HEK293 (cell line): ENCODE measurements at regions of chr1 and their contacts with region 1.

Region 1: DNA sequence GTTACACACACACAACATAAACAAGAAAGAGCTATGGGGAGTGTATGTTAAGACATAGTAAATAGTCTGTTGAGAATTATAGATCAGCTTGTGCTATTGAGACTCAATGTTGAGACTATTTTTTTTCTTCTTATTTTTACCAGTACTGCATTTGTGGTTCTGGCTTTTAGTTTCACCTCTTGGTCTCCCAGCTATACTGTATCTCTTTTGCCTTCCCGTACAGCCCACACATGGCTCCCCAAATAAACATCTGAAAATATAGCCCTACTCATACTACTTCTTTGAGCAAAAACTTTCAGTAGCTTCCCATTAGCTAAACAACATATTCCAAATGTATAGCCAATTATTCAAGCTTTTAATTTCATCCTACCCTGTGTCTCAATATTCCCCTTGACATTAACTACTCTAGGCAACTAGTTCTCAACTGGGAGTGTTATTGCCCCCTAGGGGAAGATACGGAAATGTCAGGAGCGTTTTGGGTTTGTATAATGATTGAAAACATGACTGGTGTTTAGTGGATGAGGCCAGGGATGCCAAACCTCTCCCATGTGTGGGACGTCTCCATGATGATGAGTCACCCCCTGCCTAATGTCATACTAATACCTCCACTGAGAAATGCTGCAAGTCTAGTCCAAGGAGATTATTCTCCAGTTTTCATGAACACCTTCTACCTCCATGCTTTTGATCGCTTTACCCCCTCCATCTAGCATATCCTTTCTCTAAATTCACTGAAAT is 6.8 kb downstream of the RPE65 start:
- H3K4me3 ChIP-seq: no peak overlapping the region
- H3K27ac ChIP-seq: no peak overlapping the region
- H3K4me1 ChIP-seq: no peaks in the 10 kb centered on the region
- CTCF ChIP-seq: no peak

Region 2: GRCh38 chr1:68065766-68066165 is 377.2 kb before region 1 on chr1:
- CTCF ChIA-PET with region 1: no interaction called
- POLR2A ChIA-PET with region 1: no interaction called
- H3K4me3 ChIP-seq: no peak overlapping the region
- H3K27ac ChIP-seq: no peak overlapping the region
- H3K4me1 ChIP-seq: no peaks in the 10 kb centered on the region
- CTCF ChIP-seq: no peak

Region 3: DNA sequence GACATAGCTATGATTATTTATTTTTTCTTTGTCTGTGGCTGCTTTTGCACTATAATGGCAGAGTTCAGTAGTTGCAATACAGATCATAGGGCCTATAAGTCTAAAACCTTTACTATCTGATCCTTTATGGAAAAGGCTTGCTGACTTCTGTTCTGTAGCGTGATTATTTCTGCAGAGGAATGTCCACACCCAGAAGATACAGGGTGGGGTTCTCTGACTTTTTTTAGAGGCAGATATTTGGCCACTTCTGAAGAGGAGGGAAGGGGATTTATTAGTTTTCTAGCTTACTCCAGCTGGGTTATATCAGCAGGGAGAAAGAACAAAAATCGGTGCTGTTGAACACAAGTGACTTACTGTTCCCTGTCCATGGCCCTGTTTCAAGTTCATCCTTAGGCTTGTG is 90.8 kb before region 1 on chr1:
- CTCF ChIA-PET with region 1: interaction called, 16 read pairs
- POLR2A ChIA-PET with region 1: no interaction called
- H3K4me3 ChIP-seq: no peak overlapping the region
- H3K27ac ChIP-seq: no peak overlapping the region
- H3K4me1 ChIP-seq: peaks cover 7% of the 10 kb centered on the region; the same call in 1 of the 2 replicates
- CTCF ChIP-seq: no peak

Region 4: GRCh38 chr1:68429233-68429808 is 13.7 kb before region 1 on chr1:
- CTCF ChIA-PET with region 1: interaction called, 23 read pairs
- POLR2A ChIA-PET with region 1: no interaction called
- H3K4me3 ChIP-seq: no peak overlapping the region
- H3K27ac ChIP-seq: no peak overlapping the region
- H3K4me1 ChIP-seq: no peaks in the 10 kb centered on the region
- CTCF ChIP-seq: no peak

Region 5: DNA sequence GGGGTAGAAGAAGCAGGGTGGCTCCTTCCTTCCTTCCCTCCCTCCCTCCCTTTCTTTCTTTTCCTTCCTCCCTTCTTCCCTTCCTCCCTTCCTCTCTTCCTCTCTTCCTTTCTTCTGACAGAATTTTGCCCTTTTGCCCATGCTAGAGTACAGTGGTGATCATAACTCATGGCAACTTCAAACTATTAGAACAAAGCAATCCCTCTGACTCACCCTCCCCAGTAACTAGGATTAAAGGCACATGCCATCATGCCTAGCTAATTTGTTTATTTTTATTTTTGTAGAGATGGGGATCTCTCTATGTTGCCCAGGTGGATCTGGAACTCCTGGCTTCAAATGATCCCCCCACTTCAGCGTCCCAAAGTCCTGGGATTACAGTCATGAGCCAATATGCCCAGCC is 16.8 kb after region 1 on chr1:
- CTCF ChIA-PET with region 1: interaction called, 11 read pairs
- POLR2A ChIA-PET with region 1: no interaction called
- H3K4me3 ChIP-seq: no peak overlapping the region
- H3K27ac ChIP-seq: no peak overlapping the region
- H3K4me1 ChIP-seq: no peaks in the 10 kb centered on the region
- CTCF ChIP-seq: no peak